ENCODE measurements at regions of chr20 and their contacts with region 1.

Region 1: GRCh38 chr20:4720041-4720976 is 1.4 kb upstream of the PRND start:
- DNase-seq: peak; percentile 68 to 90
- ATAC-seq: peak; percentile 75 to 85
- H3K4me3 ChIP-seq: peak overlapping the region; percentile 23; the same call in 1 of the 3 replicates
- H3K27ac ChIP-seq: no peak overlapping the region
- H3K4me1 ChIP-seq: peaks cover 6% of the 10 kb centered on the region; the same call in 2 of the 3 replicates
- CTCF ChIP-seq: peak; percentile 99
- EP300 ChIP-seq: no peak
- POLR2A ChIP-seq: no peak
- RAD21 ChIP-seq: peak; percentile 99

Region 2: DNA sequence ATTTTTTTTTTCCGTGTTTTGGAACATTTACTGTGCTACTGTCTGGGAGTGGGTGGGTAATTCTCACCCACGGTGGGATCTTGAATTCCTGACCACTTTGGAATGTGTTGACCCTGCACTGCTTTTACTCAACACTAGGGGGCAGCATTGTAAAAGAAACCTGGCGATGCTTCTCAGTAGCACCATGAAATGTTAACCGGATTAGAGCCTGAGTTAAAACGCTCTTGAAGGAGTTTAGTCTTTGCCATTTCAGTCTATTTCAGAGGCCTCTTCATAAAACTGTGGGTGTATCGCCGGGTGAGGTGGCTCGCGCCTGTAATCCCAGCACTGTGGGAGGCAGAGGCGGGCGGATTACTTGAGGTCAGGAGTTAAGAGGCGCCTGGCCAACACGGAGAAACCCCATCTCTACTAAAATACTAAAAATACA is 113.0 kb before region 1 on chr20:
- CTCF ChIA-PET with region 1: interaction called, 378 read pairs
- POLR2A ChIA-PET with region 1: interaction called, 4 read pairs
- DNase-seq: peak; percentile 75 to 84
- ATAC-seq: peak; percentile 69 to 92
- H3K4me3 ChIP-seq: no peak overlapping the region
- H3K27ac ChIP-seq: 0 out of 6 replicates have a peak overlapping the region, but pooled peaks of 1 of the 2 experiments have one; percentile 44
- H3K4me1 ChIP-seq: no peaks in the 10 kb centered on the region
- CTCF ChIP-seq: peak; percentile 99
- EP300 ChIP-seq: no peak
- POLR2A ChIP-seq: no peak
- RAD21 ChIP-seq: peak; percentile 99

Region 3: GRCh38 chr20:4613718-4614620 is 106.3 kb before region 1 on chr20:
- CTCF ChIA-PET with region 1: interaction called, 378 read pairs
- POLR2A ChIA-PET with region 1: interaction called, 4 read pairs
- DNase-seq: peak; percentile 60 to 75
- ATAC-seq: peak; percentile 72 to 88; a peak in 5 of 6 replicates
- H3K4me3 ChIP-seq: no peak overlapping the region
- H3K27ac ChIP-seq: no peak overlapping the region
- H3K4me1 ChIP-seq: no peaks in the 10 kb centered on the region
- CTCF ChIP-seq: peak; percentile 72
- EP300 ChIP-seq: no peak
- POLR2A ChIP-seq: no peak
- RAD21 ChIP-seq: peak; percentile 83 to 90

Region 4: GRCh38 chr20:4697189-4697833 is 23.0 kb before region 1 on chr20:
- CTCF ChIA-PET with region 1: interaction called, 11 read pairs
- POLR2A ChIA-PET with region 1: no interaction called
- DNase-seq: no peak
- ATAC-seq: no peak
- H3K4me3 ChIP-seq: no peak overlapping the region
- H3K27ac ChIP-seq: no peak overlapping the region
- H3K4me1 ChIP-seq: peaks cover 1% of the 10 kb centered on the region; the same call in 2 of the 3 replicates
- CTCF ChIP-seq: no peak
- EP300 ChIP-seq: no peak
- POLR2A ChIP-seq: no peak
- RAD21 ChIP-seq: no peak

Region 5: GRCh38 chr20:4730780-4731179 is 10.5 kb after region 1 on chr20:
- CTCF ChIA-PET with region 1: interaction called, 132 read pairs
- POLR2A ChIA-PET with region 1: no interaction called
- DNase-seq: no peak
- ATAC-seq: no peak
- H3K4me3 ChIP-seq: no peak overlapping the region
- H3K27ac ChIP-seq: no peak overlapping the region
- H3K4me1 ChIP-seq: peaks cover 6% of the 10 kb centered on the region; the same call in 1 of the 3 replicates
- CTCF ChIP-seq: no peak
- EP300 ChIP-seq: no peak
- POLR2A ChIP-seq: no peak
- RAD21 ChIP-seq: no peak

Measured in A549 (cell line).